Heart right ventricle (tissue), 16 donors: ENCODE measurements at regions of chr12 and their contacts with region 1.

Region 1: DNA sequence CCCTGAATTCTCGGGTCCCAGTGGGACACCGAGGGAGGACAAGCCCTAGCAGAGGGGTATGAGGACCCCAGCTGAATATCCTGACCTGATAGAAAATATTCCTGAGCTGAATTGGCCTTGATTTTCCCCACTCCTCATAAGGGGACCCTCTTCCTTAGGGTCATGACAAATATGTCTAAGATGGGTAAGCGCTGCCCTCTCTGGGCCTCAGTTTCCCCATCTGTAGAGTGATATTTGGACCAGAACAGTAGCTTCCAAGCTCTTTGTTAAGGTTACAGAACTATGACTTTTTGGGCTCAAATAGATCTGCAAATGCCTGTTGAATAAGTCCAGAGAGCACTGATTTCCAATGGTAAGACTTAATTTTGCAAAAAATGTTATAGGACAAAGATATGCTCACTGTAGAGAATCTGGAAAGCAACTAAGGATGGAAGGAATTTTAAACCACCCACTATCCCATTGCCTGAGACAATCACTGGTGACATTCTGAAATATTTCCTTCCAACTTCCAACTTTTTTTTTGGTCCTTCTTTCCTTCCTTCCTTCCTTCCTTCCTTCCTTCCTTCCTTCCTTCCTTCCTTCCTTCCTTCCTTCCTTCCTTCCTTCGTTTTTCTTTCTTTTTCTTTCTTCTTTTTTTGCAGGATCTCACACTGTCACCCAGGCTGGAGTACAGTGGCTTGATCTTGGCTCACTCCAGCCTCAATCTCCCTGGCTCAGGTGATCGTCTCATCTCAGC is 32.0 kb downstream of the MYL2 start:
- DNase-seq: no peak
- ATAC-seq: peak in 1 of 8 donors; percentile 9
- H3K4me3 ChIP-seq: peak overlapping the region in 5 of 10 donors; percentile 39 to 60 (median 58)
- H3K27ac ChIP-seq: peak overlapping the region in 1 of 10 donors; percentile 59
- H3K4me1 ChIP-seq: peaks cover 0 to 16% (median 7%) of the 10 kb centered on the region in 9 donors
- H3K27me3 ChIP-seq: no peaks in the 10 kb centered on the region
- CTCF ChIP-seq: peak in 4 of 9 donors; percentile 2 to 43 (median 15)

Region 2: DNA sequence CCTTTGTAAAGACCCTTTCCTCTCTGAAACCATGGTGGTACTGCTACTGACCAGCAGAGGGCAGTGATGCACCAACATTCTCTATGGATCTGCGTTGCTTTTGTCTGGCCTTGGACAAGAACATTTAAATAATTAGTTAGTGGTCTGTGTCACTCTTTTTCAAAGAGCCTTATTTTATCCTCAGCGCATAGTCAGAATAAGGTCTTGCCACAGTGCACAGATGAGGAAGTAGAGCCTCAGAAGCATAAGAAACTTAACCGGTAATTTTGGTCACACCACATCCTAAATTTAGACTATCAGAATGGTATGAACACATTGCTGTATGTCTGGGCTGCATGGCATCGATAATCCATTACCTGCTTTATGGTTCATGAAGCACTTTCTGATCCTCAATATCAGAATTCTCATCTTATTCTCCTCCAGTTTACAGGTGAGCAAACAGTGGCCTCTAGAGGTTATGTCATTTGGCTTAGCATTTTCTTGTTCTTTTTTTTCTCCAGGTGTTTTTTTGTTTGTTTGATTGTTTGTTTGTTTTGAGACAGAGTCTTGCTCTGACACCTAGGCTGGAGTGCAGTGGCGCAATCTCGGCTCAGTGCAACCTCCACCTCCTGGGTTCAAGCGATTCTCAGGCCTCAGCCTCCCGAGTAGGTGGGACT is 788.0 kb before region 1 on chr12:
- intact Hi-C with region 1: loop called in 1 of 10 experiments (anchors 10 kb)
- DNase-seq: peak; percentile 34 to 70
- ATAC-seq: peak; percentile 60 to 82 (median 72)
- H3K4me3 ChIP-seq: no peak overlapping the region
- H3K27ac ChIP-seq: peak overlapping the region in 2 of 10 donors; percentile 18 to 39
- H3K4me1 ChIP-seq: peaks cover 0 to 17% (median 6%) of the 10 kb centered on the region in 9 donors
- H3K27me3 ChIP-seq: no peaks in the 10 kb centered on the region
- CTCF ChIP-seq: peak; percentile 84 to 95 (median 90)

Region 3: DNA sequence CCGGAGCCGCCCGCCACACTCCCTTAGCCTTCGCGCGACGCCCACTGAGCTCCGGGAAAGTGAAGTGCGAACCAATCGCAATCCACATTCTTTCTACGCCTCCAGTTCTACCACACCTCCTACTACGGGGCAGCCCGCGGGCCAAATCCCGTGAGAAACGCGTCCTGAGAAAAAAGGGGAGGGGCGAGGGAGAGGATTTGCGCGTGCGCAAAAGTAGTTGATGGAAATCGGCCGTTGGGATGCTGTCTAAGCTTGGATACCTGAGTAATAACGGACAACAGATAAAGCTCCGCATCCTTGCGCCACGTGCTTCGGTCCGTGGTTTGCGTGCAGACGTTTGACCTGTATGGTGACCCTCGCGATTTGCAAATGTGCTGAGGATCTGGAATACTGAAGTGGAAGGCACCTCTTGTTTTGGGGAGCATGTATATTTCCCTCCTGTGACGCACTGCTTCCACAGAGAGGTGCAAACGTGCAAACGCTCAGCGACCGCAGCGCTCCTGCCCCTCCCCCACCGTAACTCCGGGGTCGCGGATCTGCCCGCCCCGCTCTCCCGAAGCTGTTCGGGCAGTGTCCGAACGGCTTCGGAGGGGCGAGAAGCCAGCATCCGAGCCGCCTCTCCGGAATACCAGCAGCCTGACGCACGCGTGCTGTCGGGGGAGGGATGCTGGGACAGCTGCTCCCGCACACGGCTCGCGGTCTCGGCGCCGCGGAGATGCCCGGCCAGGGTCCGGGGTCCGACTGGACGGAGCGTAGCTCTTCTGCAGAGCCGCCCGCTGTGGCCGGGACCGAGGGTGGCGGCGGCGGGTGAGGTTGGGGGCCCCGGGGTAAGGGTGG is 420.0 kb before region 1 on chr12 and contains the starts of genes FAM216A and GPN3:
- intact Hi-C with region 1: loop called in 1 of 10 experiments (anchors 10 kb)
- DNase-seq: peak; percentile 95 to 98
- ATAC-seq: peak; percentile 94 to 97 (median 96)
- H3K4me3 ChIP-seq: peak within 1 kb of the TSS; percentile 56 to 90 (median 77)
- H3K27ac ChIP-seq: peak within 1 kb of the TSS; percentile 62 to 96 (median 88)
- H3K4me1 ChIP-seq: peaks cover 7 to 28% (median 24%) of the 10 kb centered on the region in 9 donors
- H3K27me3 ChIP-seq: no peaks in the 10 kb centered on the region
- CTCF ChIP-seq: no peak
- total RNA-seq, gene FAM216A: 2.4 to 9.2 (median 5.4) TPM
- total RNA-seq, gene GPN3: 25.3 to 37.5 (median 31.1) TPM

Region 4: DNA sequence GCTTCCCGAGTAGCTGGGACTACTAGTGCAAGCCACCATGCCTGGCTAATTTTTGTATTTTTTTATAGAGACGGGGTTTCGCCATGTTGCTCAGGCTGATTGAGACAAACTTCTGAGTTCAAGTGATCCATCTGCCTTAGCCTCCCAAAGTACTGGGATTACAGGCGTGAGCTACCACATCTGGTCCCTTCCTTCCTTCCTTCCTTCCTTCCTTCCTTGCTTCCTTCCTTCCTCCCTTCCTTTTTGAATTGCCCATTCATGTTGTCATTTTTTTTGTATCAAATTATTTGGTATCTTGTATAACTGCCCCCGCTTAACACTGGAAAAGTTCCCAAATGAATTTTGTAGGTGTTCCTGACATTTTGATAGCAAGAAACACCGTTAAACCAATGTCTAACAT is 374.6 kb before region 1 on chr12:
- intact Hi-C with region 1: loop called in 4 of 10 experiments (anchors 5 to 10 kb)
- DNase-seq: no peak
- ATAC-seq: no peak
- H3K4me3 ChIP-seq: no peak overlapping the region
- H3K27ac ChIP-seq: no peak overlapping the region
- H3K4me1 ChIP-seq: peaks cover 0 to 5% (median 0%) of the 10 kb centered on the region in 9 donors
- H3K27me3 ChIP-seq: no peaks in the 10 kb centered on the region
- CTCF ChIP-seq: no peak

Region 5: GRCh38 chr12:110606253-110606611 is 282.2 kb before region 1 on chr12:
- intact Hi-C with region 1: loop called in 6 of 10 experiments (anchors 5 to 10 kb)
- DNase-seq: no peak
- ATAC-seq: no peak
- H3K4me3 ChIP-seq: peak overlapping the region in 2 of 10 donors; percentile 20 to 35
- H3K27ac ChIP-seq: peak overlapping the region in 5 of 10 donors; percentile 17 to 91 (median 51)
- H3K4me1 ChIP-seq: peaks cover 0 to 12% (median 0%) of the 10 kb centered on the region in 9 donors
- H3K27me3 ChIP-seq: no peaks in the 10 kb centered on the region
- CTCF ChIP-seq: no peak

Region 6: DNA sequence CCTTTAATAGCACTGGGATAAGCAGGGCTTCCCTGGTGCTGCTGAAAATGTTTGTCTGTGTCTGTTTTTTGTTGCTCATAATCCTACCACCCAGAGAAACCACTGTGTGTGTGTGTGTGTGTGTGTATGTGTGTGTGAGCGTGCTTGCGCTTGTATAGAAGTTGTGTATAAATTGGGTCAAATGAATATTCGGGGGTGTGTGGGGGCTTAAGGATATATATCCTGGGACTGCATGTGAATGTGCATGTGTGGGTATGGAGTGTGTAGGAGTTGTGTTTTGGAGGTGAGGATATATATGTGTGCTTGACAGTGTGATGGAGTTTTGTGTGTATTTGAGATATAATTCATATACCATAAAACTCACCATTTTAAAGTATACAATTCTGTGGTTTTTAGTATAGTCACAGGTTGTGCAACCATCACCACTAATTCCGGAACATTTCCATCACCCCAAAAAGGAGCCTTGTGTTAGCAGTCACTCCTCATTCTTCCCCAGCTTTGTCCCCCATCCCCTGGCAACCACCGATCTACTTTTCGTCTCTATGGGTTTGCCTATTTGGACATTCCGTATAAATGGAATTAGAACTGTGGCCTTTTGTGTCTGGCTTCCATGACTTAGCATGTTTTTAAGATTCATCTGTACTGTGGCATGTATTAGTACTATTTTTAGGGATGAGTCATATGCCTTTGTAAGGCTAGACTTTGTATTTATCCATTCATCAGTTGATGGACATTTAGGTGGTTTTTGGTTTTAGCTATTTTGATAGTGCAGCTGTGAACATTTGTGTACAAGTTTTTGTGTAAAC is 248.9 kb before region 1 on chr12:
- intact Hi-C with region 1: loop called in 2 of 10 experiments (anchors 5 to 10 kb)
- DNase-seq: no peak
- ATAC-seq: peak in 6 of 8 donors; percentile 36 to 62 (median 59)
- H3K4me3 ChIP-seq: no peak overlapping the region
- H3K27ac ChIP-seq: peak overlapping the region in 8 of 10 donors; percentile 43 to 71 (median 60)
- H3K4me1 ChIP-seq: peaks cover 6 to 42% (median 21%) of the 10 kb centered on the region in 9 donors
- H3K27me3 ChIP-seq: no peaks in the 10 kb centered on the region
- CTCF ChIP-seq: no peak

Region 7: DNA sequence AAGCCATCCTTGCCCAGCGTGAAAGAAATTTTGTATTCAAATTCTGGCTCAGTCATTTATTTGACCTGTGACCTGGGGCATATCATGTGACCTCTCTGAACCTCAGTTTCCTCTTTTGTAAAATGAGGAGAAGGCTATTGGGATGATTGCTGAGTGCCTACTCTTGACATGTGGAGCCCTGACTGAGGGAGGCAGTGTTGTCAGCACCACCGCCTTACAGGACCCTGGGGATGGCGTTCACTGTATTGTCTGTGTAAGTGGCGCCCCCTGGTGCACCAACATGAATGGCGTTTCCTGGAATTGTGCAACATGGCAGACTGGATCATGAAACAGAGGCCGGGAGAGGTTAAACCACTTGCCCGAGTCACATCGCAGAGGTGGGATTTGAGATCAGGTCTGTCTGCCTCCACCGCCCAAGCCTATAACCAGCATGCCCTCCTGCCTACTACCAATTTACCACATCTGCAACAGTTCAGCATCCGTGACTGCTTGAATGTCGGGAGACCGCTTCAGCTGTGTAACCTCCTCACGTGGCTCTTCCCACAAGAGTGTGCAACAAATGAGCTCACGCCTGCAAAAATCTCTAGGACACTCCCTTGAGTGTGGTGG is 61.7 kb before region 1 on chr12:
- intact Hi-C with region 1: loop called in 5 of 10 experiments (anchors 2 to 5 kb)
- DNase-seq: peak; percentile 86 to 87
- ATAC-seq: peak; percentile 92 to 97 (median 94)
- H3K4me3 ChIP-seq: peak overlapping the region in 4 of 10 donors; percentile 23 to 37 (median 30)
- H3K27ac ChIP-seq: no peak overlapping the region
- H3K4me1 ChIP-seq: peaks cover 0 to 6% (median 0%) of the 10 kb centered on the region in 9 donors
- H3K27me3 ChIP-seq: no peaks in the 10 kb centered on the region
- CTCF ChIP-seq: peak; percentile 60 to 87 (median 78)

Region 8: DNA sequence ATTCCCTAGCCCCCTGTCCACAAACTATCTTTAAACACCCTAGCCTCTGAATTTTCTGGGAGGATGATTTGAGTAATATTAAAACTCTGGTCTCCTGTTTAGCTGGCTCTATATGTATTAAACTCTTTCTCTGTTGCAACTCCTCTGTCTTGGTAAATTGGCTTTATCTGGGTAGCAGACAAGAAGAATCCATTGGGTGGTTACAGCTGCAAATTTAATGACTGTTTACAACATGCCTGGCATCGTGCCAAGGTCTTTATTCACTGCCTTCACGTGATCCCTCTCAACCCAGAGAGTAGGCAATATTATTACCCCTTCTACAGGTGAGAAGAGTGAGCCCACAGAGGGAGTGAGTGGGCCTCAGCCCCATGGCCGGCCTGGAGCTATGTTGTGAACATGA is 109.7 kb after region 1 on chr12:
- intact Hi-C with region 1: no loop called
- DNase-seq: no peak
- ATAC-seq: no peak
- H3K4me3 ChIP-seq: no peak overlapping the region
- H3K27ac ChIP-seq: no peak overlapping the region
- H3K4me1 ChIP-seq: peaks cover 0 to 10% (median 0%) of the 10 kb centered on the region in 9 donors
- H3K27me3 ChIP-seq: no peaks in the 10 kb centered on the region
- CTCF ChIP-seq: no peak